ENCODE measurements at regions of chr6 and their contacts with region 1.

Region 1: DNA sequence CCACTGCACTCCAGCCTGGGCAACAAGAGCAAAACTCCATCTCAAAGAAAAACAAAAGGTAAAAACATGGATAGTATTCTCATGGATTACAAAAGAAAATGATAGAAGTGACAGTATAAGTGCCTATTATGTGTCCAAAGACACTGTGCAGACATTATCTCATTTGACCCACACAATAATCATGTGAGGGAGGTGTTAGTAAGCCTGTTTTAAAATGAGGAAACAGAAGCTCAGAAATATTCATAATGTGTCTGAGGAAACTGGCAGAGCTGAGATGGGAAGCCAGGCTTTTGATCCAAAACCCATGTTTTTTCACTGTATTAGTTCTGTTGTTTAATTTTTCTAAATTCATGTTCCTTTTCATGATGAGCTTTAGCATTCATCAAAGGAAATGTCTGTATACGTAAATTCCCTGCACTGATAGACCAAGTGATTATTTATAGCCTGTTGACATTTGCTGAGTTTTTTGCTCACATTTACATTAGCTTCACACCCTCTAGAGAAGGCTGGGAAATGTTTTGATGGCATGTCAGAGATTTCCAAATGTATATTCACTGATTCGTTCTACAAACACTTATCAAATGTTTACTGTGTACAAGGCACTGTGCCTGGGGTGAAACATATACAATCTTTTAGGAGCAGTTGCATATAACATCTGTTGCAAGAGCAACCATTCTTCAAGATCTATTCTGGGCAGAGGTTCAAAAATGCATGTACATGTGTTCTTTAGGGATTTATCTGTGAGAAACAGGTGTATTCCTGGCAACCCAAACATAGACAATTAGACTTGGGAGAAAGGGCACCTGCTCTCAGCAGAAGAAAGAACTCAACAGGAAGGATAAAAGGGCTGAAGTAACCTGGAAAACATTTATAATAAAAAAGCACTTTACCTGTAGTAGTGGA is 331.5 kb downstream of the SAMD5 start:
- DNase-seq: no peak
- H3K4me3 ChIP-seq: no peak overlapping the region
- H3K27ac ChIP-seq: no peak overlapping the region
- H3K4me1 ChIP-seq: no peaks in the 10 kb centered on the region
- H3K27me3 ChIP-seq: no peaks in the 10 kb centered on the region
- CTCF ChIP-seq: no peak
- EP300 ChIP-seq: no peak
- POLR2A ChIP-seq: no peak

Region 2: GRCh38 chr6:147244832-147245231 is 595.1 kb before region 1 on chr6:
- in situ Hi-C with region 1: no loop called
- intact Hi-C with region 1: loop called (anchors 5 kb)
- DNase-seq: no peak
- H3K4me3 ChIP-seq: no peak overlapping the region
- H3K27ac ChIP-seq: no peak overlapping the region
- H3K4me1 ChIP-seq: no peaks in the 10 kb centered on the region
- H3K27me3 ChIP-seq: no peaks in the 10 kb centered on the region
- CTCF ChIP-seq: no peak
- EP300 ChIP-seq: no peak
- POLR2A ChIP-seq: no peak

Region 3: GRCh38 chr6:147859071-147859470 is 19.1 kb after region 1 on chr6:
- in situ Hi-C with region 1: no loop called
- intact Hi-C with region 1: no loop called
- DNase-seq: no peak
- H3K4me3 ChIP-seq: no peak overlapping the region
- H3K27ac ChIP-seq: no peak overlapping the region
- H3K4me1 ChIP-seq: no peaks in the 10 kb centered on the region
- H3K27me3 ChIP-seq: no peaks in the 10 kb centered on the region
- CTCF ChIP-seq: no peak
- EP300 ChIP-seq: no peak
- POLR2A ChIP-seq: no peak